Gastrocnemius medialis (tissue), 4 donors: ENCODE measurements at regions of chr11 and their contacts with region 1.

Region 1: DNA sequence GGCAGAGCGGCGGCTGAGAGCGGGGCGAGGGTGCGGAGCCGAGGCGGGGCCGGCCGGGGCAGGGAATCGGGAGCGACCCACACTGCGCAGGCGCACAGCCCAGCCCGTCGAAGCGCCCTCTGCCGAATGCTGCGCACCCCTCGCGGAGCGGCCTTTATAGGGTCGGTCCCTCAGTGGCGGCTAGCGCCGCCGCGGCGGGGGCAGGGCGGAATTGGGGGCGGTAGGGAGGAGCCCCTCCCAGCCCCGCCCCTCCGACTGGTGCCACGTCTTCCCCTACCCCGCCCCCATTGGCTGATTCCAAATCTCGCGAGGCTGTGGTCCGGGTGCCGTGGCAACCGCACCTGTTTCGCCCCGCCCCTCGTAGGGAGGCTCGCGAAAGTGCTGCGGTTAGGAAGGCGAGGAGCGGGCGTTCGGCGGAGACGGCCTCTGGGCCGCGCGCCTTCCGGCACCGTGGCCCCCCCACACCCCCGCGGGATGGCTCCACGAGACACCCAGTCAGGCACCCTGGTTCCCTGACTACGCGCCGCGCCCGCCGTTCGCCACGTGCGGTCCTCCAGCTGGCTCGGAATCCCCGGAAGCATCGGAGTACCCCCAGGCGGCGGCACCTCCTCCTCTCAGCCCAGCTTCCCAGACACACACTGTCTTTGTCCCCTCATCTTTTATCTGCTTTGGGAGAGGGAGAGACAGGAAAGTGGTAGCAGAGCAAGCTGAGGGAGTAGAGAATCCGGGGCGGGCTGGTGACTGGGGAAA is at the start of gene EHD1:
- DNase-seq: peak; percentile 98 to 99
- ATAC-seq: peak; percentile 72 to 84
- H3K4me3 ChIP-seq: peak within 1 kb of the TSS; percentile 71 to 82 (median 78)
- H3K27ac ChIP-seq: peak within 1 kb of the TSS; percentile 94 to 95 (median 94)
- H3K4me1 ChIP-seq: peaks cover 57 to 61% of the 10 kb centered on the region in 2 donors
- H3K27me3 ChIP-seq: no peaks in the 10 kb centered on the region
- CTCF ChIP-seq: peak in 4 of 5 experiments; percentile 34 to 60 (median 36)
- POLR2A ChIP-seq: peak; percentile 98 to 100
- total RNA-seq, gene EHD1: 24.8 to 46.2 (median 31.3) TPM

Region 2: GRCh38 chr11:64240394-64241174 is 638.1 kb before region 1 on chr11 and contains the start of gene FKBP2:
- in situ Hi-C with region 1: no loop called
- intact Hi-C with region 1: loop called (anchors 10 kb)
- DNase-seq: peak; percentile 94 to 98
- ATAC-seq: peak; percentile 64 to 69
- H3K4me3 ChIP-seq: peak within 1 kb of the TSS; percentile 85 to 96 (median 91)
- H3K27ac ChIP-seq: peak within 1 kb of the TSS; percentile 92 to 100 (median 96)
- H3K4me1 ChIP-seq: peaks cover 33 to 42% of the 10 kb centered on the region in 2 donors
- H3K27me3 ChIP-seq: no peaks in the 10 kb centered on the region
- CTCF ChIP-seq: no peak
- POLR2A ChIP-seq: peak; percentile 97 to 98
- total RNA-seq, gene FKBP2: 20.2 to 54.7 (median 27.6) TPM

Region 3: GRCh38 chr11:64854534-64855429 is 23.9 kb before region 1 on chr11:
- in situ Hi-C with region 1: no loop called
- intact Hi-C with region 1: loop called (anchors 1 kb)
- DNase-seq: peak; percentile 72 to 94
- ATAC-seq: peak; percentile 49 to 53
- H3K4me3 ChIP-seq: peak overlapping the region in 2 of 4 donors; percentile 7 to 19
- H3K27ac ChIP-seq: peak overlapping the region; percentile 90 to 94 (median 92)
- H3K4me1 ChIP-seq: peaks cover 86 to 96% of the 10 kb centered on the region in 2 donors
- H3K27me3 ChIP-seq: no peaks in the 10 kb centered on the region
- CTCF ChIP-seq: no peak
- POLR2A ChIP-seq: peak in 1 of 2 donors; percentile 14

Region 4: DNA sequence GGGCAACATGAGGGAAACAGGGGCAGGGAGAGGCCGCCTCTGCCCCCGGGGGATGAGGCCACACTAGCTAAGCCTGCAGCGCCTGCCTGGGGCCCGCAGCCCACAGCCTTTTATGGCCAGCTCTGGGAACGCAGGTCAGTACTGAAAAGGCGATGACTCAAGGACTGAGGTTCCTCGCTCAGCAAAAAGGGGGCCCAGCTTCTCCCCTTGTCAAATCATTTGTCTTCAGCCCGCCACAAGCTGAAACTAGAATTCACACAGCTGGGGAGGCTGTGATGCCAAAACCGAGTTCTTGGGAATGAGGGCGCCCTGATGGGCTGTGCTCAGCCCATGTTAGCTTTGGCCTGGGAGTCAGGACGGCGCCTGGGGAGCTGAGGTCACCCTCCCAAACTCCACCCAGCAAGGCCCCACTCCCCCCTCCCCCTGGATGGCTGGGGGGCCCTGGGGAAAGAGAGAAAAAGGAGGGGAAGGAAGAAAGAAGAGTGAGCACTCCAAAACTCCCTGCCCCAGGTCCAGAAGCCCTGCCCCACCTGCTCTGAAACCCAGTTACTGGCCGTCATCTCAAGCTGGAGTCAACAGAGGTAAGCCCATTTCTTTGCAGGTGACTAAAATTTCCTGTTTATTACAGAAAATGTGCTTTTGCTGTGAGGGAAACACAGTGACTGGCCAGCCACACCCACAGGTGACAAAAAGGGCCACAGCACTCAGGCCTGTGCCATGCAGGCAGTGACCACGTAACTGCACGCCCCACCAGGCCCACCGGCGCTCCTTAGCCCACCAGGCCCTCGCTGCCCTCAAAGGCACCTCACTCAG is 14.0 kb before region 1 on chr11:
- in situ Hi-C with region 1: no loop called
- intact Hi-C with region 1: loop called (anchors 1 kb)
- DNase-seq: peak in 1 of 2 donors; percentile 85
- ATAC-seq: peak; percentile 69 to 81
- H3K4me3 ChIP-seq: peak overlapping the region; percentile 7 to 27 (median 20)
- H3K27ac ChIP-seq: peak overlapping the region; percentile 88 to 94 (median 93)
- H3K4me1 ChIP-seq: peaks cover 62 to 72% of the 10 kb centered on the region in 2 donors
- H3K27me3 ChIP-seq: no peaks in the 10 kb centered on the region
- CTCF ChIP-seq: no peak
- POLR2A ChIP-seq: no peak

Region 5: DNA sequence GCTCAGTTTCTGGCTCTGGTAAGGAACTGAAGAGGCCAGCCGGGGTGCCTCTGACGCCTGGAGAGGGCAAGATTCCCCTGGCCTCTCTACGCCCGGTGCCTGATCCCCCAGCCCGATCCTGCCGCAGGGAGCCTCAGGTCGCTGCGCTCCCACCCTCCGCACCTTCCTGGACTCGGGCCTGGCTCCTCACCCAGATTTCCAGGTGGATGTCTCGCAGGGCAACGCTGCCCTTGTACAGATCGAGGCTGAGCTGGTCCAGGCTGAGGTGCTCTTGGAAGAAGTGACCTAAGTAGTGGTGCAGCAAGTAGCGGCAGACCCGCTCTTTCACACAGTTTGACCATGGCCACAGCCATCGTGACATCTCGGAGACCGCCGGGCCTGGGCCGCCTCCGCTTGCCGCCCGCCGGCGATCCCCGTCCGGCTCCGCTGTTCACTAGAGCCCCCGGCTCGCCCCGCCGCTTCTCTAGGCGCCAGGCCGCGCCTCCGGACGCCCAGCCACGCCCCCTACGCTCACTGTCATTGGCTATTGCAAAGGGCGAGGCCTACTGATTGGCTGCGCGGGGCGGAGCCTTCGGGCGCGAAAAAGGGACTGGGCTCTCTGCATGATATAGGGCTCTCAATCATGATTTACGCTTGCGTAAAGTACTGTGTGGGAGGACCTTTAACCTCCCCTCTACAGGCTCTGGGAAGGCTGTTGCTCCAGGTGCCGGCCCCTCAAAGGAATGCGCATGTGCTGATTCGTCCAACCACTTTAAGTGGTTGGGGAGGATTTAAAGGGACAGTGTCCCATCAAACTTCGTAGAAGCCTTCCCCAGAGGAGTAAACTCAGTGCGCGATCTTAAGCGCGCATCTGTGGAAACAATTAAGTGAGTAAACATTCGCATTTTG is 38.4 kb after region 1 on chr11 and contains the start of gene ATG2A:
- in situ Hi-C with region 1: no loop called
- intact Hi-C with region 1: loop called (anchors 1 kb)
- DNase-seq: peak; percentile 98 to 99
- ATAC-seq: peak; percentile 99
- H3K4me3 ChIP-seq: peak within 1 kb of the TSS; percentile 80 to 91 (median 90)
- H3K27ac ChIP-seq: peak within 1 kb of the TSS; percentile 84 to 88 (median 86)
- H3K4me1 ChIP-seq: peaks cover 24 to 27% of the 10 kb centered on the region in 2 donors
- H3K27me3 ChIP-seq: no peaks in the 10 kb centered on the region
- CTCF ChIP-seq: no peak
- POLR2A ChIP-seq: peak; percentile 87 to 88
- total RNA-seq, gene ATG2A: 10.7 to 97.5 (median 37.9) TPM